Gastrocnemius medialis (tissue), 4 donors: ENCODE measurements at regions of chr2 and their contacts with region 1.

Region 1: DNA sequence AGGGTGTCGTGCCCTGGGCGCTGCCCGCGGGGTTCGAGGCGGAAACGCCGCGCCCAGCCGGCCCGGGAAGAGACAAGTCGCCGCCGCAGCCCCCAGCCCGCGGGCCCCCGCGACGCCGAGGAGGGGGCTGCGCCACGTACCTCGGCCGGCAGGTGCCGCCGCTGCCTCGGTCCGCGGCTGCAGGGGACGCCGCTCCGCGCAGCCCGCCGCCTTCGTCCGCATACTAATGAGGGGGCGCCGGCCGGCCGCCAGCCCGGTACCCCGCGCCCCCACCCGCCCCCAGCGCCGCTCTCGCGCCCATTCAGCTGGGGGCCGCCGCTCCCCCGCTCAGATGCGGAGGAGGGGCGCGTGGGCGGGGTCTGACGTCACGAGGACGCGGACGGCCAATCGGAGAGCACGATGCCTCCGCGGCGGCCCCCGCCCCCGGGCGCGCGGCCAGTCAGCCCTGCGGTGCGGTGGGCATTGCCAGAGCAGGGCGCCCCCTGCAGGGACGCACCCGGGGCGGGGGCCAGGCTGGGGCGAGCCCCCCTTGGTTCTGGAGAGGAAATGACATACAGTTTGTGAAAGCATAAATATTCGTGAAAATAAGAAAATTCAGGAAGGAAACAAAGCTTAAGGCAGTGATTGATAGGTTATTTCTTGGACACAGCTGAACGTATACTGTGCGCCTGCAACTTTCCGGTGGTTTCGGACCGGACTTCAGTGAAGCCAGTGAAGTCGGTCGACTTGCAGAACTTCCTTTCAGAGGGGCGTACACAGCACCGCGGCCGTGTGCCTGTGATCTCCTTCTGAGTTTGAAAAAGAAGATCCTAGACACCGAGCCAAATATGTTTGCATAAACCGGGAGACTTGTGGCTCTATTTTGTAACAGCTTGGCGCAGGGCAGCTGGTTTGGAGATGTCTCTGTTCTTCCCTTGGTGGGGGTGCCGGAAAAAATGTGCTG is at the start of gene ST3GAL5:
- DNase-seq: peak; percentile 84
- ATAC-seq: peak; percentile 74 to 80
- H3K4me3 ChIP-seq: peak within 1 kb of the TSS; percentile 53 to 87 (median 72)
- H3K27ac ChIP-seq: peak within 1 kb of the TSS; percentile 82 to 92 (median 88)
- H3K4me1 ChIP-seq: peaks cover 28 to 33% of the 10 kb centered on the region in 2 donors
- H3K27me3 ChIP-seq: no peaks in the 10 kb centered on the region
- CTCF ChIP-seq: peak; percentile 59 to 80 (median 66)
- POLR2A ChIP-seq: peak; percentile 48 to 78
- total RNA-seq, gene ST3GAL5: 12.6 to 26.0 (median 21.8) TPM

Region 2: GRCh38 chr2:85741833-85742455 is 147.0 kb before region 1 on chr2:
- in situ Hi-C with region 1: no loop called
- intact Hi-C with region 1: no loop called
- DNase-seq: peak; percentile 77 to 93
- ATAC-seq: peak; percentile 34 to 37
- H3K4me3 ChIP-seq: peak overlapping the region; percentile 4 to 30 (median 24)
- H3K27ac ChIP-seq: peak overlapping the region; percentile 94 to 98 (median 97)
- H3K4me1 ChIP-seq: peaks cover 77 to 82% of the 10 kb centered on the region in 2 donors
- H3K27me3 ChIP-seq: no peaks in the 10 kb centered on the region
- CTCF ChIP-seq: no peak
- POLR2A ChIP-seq: peak; percentile 29 to 31

Region 3: GRCh38 chr2:85826990-85827878 is 61.7 kb before region 1 on chr2:
- in situ Hi-C with region 1: loop called in 2 of 4 experiments (anchors 5 to 10 kb)
- intact Hi-C with region 1: loop called (anchors 2 kb)
- DNase-seq: peak; percentile 45 to 61
- ATAC-seq: peak; percentile 81 to 85
- H3K4me3 ChIP-seq: peak overlapping the region in 3 of 4 donors; percentile 17 to 26 (median 23)
- H3K27ac ChIP-seq: no peak overlapping the region
- H3K4me1 ChIP-seq: peaks cover 4 to 7% of the 10 kb centered on the region in 2 donors
- H3K27me3 ChIP-seq: no peaks in the 10 kb centered on the region
- CTCF ChIP-seq: peak; percentile 89 to 95 (median 92)
- POLR2A ChIP-seq: no peak

Region 4: GRCh38 chr2:85954590-85955458 is 65.9 kb after region 1 on chr2:
- in situ Hi-C with region 1: no loop called
- intact Hi-C with region 1: loop called (anchors 5 kb)
- DNase-seq: no peak
- ATAC-seq: no peak
- H3K4me3 ChIP-seq: no peak overlapping the region
- H3K27ac ChIP-seq: no peak overlapping the region
- H3K4me1 ChIP-seq: peaks cover 16 to 20% of the 10 kb centered on the region in 2 donors
- H3K27me3 ChIP-seq: no peaks in the 10 kb centered on the region
- CTCF ChIP-seq: no peak
- POLR2A ChIP-seq: no peak

Region 5: DNA sequence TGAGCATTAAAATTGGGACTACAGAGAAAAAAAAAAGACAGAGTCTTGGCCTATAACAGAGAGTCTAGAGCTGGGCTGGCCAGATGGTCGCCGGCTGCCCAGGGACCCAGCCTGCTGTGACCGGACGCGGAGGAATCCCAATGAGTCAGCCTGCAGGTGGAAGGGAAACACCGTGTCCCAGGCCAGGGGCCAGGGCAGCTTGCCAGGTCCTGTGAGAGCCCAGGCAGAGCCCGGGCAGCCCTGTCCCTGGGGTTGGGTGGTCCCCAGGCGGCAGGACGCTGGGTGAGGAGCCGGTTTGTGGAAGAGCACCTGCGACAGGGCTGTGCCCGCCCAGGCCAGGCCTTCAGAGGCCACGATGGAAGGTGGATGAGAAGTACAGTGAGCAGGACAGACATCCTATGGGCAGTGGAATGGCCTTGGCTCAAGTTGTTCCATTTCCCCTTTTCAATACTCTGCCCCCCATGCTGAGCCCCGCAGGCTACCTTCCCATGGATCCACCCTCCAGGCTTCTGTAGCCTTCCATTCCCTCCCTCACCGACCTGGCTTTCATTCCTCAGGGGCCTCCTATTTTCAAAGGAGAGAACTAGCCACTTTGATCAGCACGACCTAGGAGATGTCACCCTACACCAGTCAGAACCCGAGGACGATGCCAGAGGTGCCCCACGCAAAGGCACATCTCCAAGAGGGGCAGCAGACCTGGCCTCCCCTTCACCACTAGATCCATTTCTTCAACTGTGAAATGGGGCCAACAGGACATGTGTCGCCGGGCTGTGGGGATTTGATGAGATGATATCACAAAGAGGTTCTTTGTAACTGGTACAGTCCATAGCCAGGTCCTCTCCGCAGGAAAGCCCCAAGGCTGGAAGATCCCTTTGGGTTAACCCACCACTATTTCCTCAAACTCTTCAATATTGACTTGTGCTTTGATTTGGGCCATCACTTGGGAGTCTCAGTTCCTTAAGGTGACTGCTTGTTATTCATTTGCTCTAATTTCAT is 129.2 kb after region 1 on chr2:
- in situ Hi-C with region 1: no loop called
- intact Hi-C with region 1: loop called (anchors 2 kb)
- DNase-seq: peak; percentile 87 to 94
- ATAC-seq: peak; percentile 61 to 74
- H3K4me3 ChIP-seq: no peak overlapping the region
- H3K27ac ChIP-seq: peak overlapping the region; percentile 75 to 88 (median 86)
- H3K4me1 ChIP-seq: peaks cover 29 to 41% of the 10 kb centered on the region in 2 donors
- H3K27me3 ChIP-seq: no peaks in the 10 kb centered on the region
- CTCF ChIP-seq: no peak
- POLR2A ChIP-seq: peak in 1 of 2 donors; percentile 42

Region 6: DNA sequence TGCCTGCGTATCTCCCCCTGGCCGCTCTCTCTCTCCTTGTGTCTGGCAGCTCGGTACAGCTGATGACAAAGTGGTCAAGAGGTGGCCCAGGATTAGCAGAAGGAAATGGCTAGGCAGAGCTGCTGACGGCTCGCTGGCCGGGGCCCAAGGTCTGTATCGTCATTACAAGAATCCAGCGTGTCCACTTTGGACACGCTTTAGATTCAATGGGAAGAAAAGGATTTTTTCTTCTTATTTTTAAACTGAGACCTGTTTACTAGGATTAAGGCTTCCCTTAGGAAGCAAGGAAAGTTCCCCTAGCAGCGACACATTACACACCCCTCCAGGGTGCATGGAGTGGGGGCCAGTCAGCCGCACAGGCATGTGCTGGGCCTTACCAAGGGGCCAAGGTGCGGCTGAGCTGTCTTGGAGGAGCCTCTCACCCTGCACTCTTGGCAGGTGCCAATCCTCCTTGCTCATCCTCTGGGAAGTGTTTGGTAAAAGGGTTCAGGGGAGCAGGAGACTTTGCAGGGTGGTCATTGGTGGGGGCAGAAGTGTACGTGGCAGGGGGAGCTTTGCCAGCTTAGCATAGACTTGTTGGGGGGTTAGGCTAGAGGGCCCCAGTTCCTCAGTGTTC is 139.9 kb after region 1 on chr2:
- in situ Hi-C with region 1: no loop called
- intact Hi-C with region 1: no loop called
- DNase-seq: peak; percentile 67 to 70
- ATAC-seq: peak; percentile 60 to 86
- H3K4me3 ChIP-seq: no peak overlapping the region
- H3K27ac ChIP-seq: peak overlapping the region; percentile 73 to 79 (median 76)
- H3K4me1 ChIP-seq: peaks cover 5 to 16% of the 10 kb centered on the region in 2 donors
- H3K27me3 ChIP-seq: no peaks in the 10 kb centered on the region
- CTCF ChIP-seq: no peak
- POLR2A ChIP-seq: no peak

Region 7: DNA sequence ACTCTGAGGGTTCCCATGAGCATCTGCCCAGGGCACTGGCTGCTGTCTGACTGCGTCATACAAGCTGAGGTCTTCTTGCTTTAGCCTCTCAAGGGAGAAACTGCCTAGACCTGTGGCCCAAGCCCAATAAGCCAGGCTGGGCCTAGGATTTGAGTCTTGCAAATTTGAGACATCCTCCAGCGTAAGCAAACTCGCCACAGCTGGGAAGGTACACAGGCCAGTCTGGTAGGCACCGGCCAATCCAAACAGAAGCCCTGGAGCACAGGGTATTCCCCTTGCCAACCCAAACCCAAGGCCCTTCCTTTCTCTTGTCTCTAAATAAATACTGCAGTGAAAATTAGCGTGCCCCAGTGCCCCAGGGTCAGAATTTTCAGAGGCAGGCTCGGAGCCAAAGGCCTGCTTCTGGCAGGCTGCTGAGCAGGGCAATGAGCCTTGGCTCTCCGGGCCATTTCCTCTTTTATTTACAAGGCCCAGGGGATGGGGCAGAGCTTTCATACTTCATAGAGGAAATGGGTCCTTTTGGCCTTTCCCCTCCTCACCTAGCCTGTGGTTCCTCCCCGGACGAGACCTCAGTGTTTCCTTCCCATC is 183.4 kb after region 1 on chr2:
- in situ Hi-C with region 1: loop called in 3 of 4 experiments (anchors 5 kb)
- intact Hi-C with region 1: loop called (anchors 2 kb)
- DNase-seq: peak in 1 of 2 donors; percentile 83
- ATAC-seq: peak; percentile 13 to 66
- H3K4me3 ChIP-seq: no peak overlapping the region
- H3K27ac ChIP-seq: peak overlapping the region; percentile 81 to 91 (median 87)
- H3K4me1 ChIP-seq: peaks cover 33 to 45% of the 10 kb centered on the region in 2 donors
- H3K27me3 ChIP-seq: no peaks in the 10 kb centered on the region
- CTCF ChIP-seq: no peak
- POLR2A ChIP-seq: peak; percentile 33 to 43